ENCODE measurements at regions of chr1 and their contacts with region 1.

Region 1: DNA sequence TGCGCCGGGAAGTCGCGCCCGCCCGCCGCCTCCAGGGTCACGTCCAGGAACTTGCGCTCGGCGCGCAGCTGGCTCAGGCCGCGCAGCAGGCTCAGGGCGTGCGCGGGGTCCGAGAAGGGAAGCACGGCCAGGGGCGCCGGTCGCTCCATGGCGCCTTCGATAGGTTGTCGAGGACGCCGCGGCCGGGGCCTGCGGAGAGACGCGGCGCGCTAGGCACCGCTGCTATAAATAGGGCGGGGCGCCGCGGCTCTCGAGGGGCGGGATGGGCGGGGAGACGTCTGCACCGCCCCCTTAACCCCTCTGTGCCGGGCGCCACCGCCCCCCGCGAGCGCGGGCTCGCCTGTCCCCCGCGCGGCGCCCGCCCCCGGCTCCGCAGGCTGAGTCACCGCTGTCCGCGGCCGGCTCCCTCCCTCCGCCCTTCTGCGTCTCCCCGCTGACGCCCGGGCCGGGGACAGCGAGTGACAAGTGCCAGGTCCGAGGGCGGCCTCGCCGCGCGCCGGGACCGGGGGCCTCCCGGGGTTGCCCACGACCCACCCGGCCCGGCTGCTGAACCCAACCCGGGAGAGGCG is at the start of gene KLHL21:
- DNase-seq: no peak
- ATAC-seq: peak; percentile 76
- H3K4me3 ChIP-seq: peak within 1 kb of the TSS; percentile 94
- H3K27ac ChIP-seq: peak within 1 kb of the TSS; percentile 79
- H3K4me1 ChIP-seq: peaks cover 13% of the 10 kb centered on the region
- H3K27me3 ChIP-seq: no peaks in the 10 kb centered on the region
- CTCF ChIP-seq: no peak
- EP300 ChIP-seq: no peak
- POLR2A ChIP-seq: peak; percentile 83
- RAD21 ChIP-seq: no peak
- polyA plus RNA-seq, gene KLHL21: 0.76 to 1.2 TPM

Region 2: DNA sequence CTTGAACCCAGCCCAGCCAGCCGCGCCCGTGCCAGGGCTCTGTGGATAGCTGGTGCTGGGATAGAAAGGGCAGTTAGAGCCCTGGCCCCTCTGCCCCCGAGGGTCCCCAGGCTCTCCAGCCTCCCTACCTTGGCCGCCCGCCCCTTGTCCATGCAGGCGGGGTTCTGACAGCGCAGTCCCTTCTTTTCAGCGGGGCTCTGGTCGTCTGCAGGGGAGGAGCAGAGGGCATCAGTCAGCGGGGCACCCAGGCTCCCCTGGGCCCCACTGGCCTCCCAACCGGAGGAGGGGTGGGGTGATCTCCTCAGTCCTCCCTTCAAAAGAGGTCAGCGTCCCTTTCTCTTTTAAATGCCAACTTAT is 106.4 kb before region 1 on chr1:
- CTCF ChIA-PET with region 1: no interaction called
- POLR2A ChIA-PET with region 1: no interaction called
- RAD21 ChIA-PET with region 1: no interaction called
- SMC1A ChIA-PET with region 1: no interaction called
- in situ Hi-C with region 1: no loop called
- intact Hi-C with region 1: no loop called
- DNase-seq: no peak
- ATAC-seq: no peak
- H3K4me3 ChIP-seq: no peak overlapping the region
- H3K27ac ChIP-seq: no peak overlapping the region
- H3K4me1 ChIP-seq: no peaks in the 10 kb centered on the region
- H3K27me3 ChIP-seq: peaks cover 4 to 8% of the 10 kb centered on the region in 2 experiments
- CTCF ChIP-seq: no peak
- EP300 ChIP-seq: no peak
- POLR2A ChIP-seq: no peak
- RAD21 ChIP-seq: no peak

Region 3: DNA sequence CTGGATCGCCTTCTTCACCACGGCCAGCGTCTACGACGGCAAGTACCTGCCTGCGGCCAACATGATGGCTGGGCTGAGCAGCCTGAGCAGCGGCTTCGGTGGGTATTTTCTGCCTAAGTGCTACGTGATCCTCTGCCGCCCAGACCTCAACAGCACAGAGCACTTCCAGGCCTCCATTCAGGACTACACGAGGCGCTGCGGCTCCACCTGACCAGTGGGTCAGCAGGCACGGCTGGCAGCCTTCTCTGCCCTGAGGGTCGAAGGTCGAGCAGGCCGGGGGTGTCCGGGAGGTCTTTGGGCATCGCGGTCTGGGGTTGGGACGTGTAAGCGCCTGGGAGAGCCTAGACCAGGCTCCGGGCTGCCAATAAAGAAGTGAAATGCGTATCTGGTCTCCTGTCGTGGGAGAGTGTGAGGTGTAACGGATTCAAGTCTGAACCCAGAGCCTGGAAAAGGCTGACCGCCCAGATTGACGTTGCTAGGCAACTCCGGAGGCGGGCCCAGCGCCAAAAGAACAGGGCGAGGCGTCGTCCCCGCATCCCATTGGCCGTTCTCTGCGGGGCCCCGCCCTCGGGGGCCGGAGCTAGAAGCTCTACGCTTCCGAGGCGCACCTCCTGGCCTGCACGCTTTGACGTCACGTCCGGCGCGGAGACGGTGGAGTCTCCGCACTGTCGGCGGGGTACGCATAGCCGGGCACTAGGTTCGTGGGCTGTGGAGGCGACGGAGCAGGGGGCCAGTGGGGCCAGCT is 23.2 kb before region 1 on chr1 and contains the start of gene ZBTB48:
- CTCF ChIA-PET with region 1: interaction called, 15 read pairs
- POLR2A ChIA-PET with region 1: interaction called, 22 read pairs
- RAD21 ChIA-PET with region 1: interaction called, 38 read pairs
- SMC1A ChIA-PET with region 1: interaction called, 16 read pairs
- in situ Hi-C with region 1: no loop called
- intact Hi-C with region 1: no loop called
- DNase-seq: peak; percentile 74
- ATAC-seq: peak; percentile 97
- H3K4me3 ChIP-seq: peak within 1 kb of the TSS; percentile 89
- H3K27ac ChIP-seq: peak within 1 kb of the TSS; percentile 68
- H3K4me1 ChIP-seq: peaks cover 13% of the 10 kb centered on the region
- H3K27me3 ChIP-seq: no peaks in the 10 kb centered on the region
- CTCF ChIP-seq: no peak
- EP300 ChIP-seq: no peak
- POLR2A ChIP-seq: peak; percentile 99
- RAD21 ChIP-seq: no peak
- polyA plus RNA-seq, gene ZBTB48: 1.00 to 3.3 TPM

Region 4: GRCh38 chr1:6613361-6614018 is 10.7 kb after region 1 on chr1 and contains the start of gene PHF13:
- CTCF ChIA-PET with region 1: interaction called, 4 read pairs
- POLR2A ChIA-PET with region 1: interaction called, 5 read pairs
- RAD21 ChIA-PET with region 1: no interaction called
- SMC1A ChIA-PET with region 1: interaction called, 5 read pairs
- in situ Hi-C with region 1: no loop called
- intact Hi-C with region 1: loop called (anchors 1 kb)
- DNase-seq: peak; percentile 92
- ATAC-seq: peak; percentile 96
- H3K4me3 ChIP-seq: peak within 1 kb of the TSS; percentile 98
- H3K27ac ChIP-seq: peak within 1 kb of the TSS; percentile 51
- H3K4me1 ChIP-seq: no peaks in the 10 kb centered on the region
- H3K27me3 ChIP-seq: no peaks in the 10 kb centered on the region
- CTCF ChIP-seq: no peak
- EP300 ChIP-seq: no peak; a peak in 1 of 4 replicates
- POLR2A ChIP-seq: peak; percentile 71
- RAD21 ChIP-seq: no peak
- polyA plus RNA-seq, gene PHF13: 0.87 to 1.9 TPM